Activated CD8-positive, alpha-beta memory T cell treated with anti-CD3 and anti-CD28 coated beads, Interleukin-2, amount 10 ng/mL, durations not matched to agents 7 days and 5 days (primary cell): ENCODE measurements at regions of chr3 and their contacts with region 1.

Region 1: DNA sequence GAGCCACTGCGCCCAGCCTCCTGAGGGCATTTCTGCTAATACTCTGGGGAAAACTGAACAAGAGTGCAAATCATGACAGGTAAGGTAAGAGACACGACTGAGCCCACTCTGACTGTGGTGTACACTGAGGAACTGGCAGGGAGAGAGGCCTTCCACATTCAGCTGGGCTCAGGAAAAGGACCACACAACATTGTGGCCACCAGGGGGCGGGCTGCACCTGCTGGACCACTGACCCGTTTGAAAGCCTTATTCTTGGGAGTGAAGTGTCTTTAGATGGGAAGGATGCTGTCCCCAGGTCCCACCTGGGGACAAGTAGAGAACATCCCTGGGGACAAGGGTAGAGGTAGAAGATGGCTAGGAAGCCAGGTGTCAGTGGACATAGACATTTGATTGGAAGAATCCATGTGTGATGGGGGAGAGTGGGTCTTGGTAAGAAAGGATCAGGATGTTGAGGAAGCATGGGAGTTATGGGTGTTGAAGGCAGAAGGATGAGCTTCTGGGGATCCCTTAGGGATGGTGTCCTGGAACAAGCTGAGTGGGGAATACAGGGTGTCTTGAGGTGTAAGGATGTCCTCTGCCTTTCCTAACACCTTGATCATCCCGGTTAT is 6.2 kb upstream of the CTDSPL start:
- DNase-seq: peak; percentile 82
- ATAC-seq: peak; percentile 42
- H3K4me3 Mint-ChIP-seq: no peak overlapping the region
- H3K27ac Mint-ChIP-seq: no peak overlapping the region
- H3K4me1 Mint-ChIP-seq: peaks cover 8% of the 10 kb centered on the region
- H3K27me3 Mint-ChIP-seq: peaks cover 16% of the 10 kb centered on the region

Region 2: DNA sequence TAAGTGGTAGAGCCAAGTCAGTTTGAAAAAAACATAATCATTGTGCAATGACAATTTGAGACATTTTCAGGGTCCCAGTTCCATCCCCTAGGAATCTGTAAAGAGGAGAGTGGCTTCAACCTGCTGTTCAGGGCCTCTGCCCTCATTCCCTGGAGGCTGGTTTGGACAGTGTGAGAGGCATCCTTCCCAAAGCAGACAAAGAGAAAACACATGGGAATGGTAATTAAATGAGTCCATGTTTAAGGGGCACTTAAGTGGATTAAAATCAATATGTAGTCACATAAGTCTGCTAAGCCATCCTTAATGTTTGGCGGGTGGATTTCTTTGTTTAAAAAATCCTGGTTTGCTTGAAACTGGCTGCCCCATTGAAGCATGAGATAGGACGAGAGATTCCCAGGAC is 140.1 kb before region 1 on chr3:
- CTCF ChIA-PET with region 1: no interaction called
- DNase-seq: no peak
- ATAC-seq: no peak
- H3K4me3 Mint-ChIP-seq: no peak overlapping the region
- H3K27ac Mint-ChIP-seq: no peak overlapping the region
- H3K4me1 Mint-ChIP-seq: peaks cover 3% of the 10 kb centered on the region
- H3K27me3 Mint-ChIP-seq: no peaks in the 10 kb centered on the region

Region 3: DNA sequence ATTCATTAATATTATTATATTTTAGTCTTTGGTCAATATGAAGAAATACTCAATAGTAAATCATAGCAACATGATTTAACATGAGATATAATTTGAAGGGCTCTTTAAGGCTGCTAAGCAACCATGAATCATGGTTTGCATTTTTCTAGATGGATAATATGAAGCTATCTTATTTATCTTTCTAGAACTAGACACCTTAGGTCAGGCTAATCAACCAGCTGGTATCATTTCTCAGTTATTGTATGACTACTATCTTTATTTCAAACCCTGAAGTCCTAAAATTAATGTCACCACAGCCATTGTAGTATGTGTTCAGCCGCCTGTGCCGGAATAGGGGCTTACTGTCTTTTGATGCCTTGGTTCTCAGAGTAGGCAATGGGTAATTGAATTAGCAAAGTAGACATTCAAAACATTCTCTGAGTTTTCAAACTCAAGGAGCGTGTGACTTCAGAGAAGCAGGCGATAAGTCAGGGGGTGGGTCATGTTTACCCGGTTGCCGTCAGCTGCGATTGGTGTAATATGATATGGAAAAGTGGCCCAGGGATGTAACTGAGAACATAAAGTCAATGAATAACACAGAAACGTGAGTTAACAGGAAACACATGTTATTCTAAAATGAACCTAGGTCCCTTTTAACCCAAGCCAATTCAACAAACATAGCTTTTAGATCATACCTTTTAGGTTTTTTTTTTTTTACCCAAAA is 87.2 kb before region 1 on chr3:
- CTCF ChIA-PET with region 1: no interaction called
- DNase-seq: no peak
- ATAC-seq: no peak
- H3K4me3 Mint-ChIP-seq: no peak overlapping the region
- H3K27ac Mint-ChIP-seq: no peak overlapping the region
- H3K4me1 Mint-ChIP-seq: peaks cover 3% of the 10 kb centered on the region
- H3K27me3 Mint-ChIP-seq: peaks cover 37% of the 10 kb centered on the region

Region 4: DNA sequence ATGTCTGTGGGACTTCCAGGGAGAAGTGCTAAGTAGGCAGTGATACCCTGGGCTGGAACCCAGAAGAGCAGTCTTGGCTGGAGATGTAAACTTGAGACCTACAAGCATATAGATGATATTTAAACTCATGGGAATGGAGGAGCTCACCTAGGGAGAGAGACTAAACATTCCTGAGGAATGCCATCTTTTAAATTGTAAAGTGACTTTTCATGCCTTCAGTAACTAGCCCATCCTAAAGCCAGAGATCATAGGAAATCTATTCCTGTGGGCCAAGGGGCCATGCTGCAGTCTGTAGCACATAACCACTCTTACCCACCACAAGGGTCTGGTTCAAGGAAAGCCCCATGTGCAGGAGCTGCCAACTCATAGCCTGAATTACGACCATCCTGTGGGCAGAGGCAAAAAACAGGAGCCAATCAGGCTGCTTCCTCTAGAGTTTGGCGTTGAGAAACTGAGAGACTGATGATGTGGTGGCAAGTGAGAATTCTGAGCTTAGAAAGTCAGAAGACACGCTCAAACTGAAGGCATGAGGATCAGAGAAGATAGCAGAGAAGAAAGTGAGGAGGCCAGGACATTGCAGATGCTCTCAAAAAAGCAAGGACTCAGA is 43.7 kb after region 1 on chr3:
- CTCF ChIA-PET with region 1: interaction called, 27 read pairs
- DNase-seq: peak; percentile 78
- ATAC-seq: peak; percentile 77
- H3K4me3 Mint-ChIP-seq: no peak overlapping the region
- H3K27ac Mint-ChIP-seq: peak overlapping the region; percentile 68
- H3K4me1 Mint-ChIP-seq: peaks cover 53% of the 10 kb centered on the region
- H3K27me3 Mint-ChIP-seq: peaks cover 14% of the 10 kb centered on the region